ENCODE measurements at regions of chr19 and their contacts with region 1.

Region 1: GRCh38 chr19:46186101-46187100 is 38.4 kb downstream of the IGFL2 start:
- DNase-seq: peak in 1 of 2 donors; percentile 63
- H3K4me3 ChIP-seq: no peak overlapping the region
- CTCF ChIP-seq: no peak
- POLR2A ChIP-seq: no peak

Region 2: GRCh38 chr19:46076951-46077816 is 109.2 kb before region 1 on chr19:
- intact Hi-C with region 1: loop called (anchors 5 kb)
- DNase-seq: peak; percentile 54 to 88
- H3K4me3 ChIP-seq: no peak overlapping the region
- CTCF ChIP-seq: peak in 1 of 3 donors; percentile 47
- POLR2A ChIP-seq: no peak

Region 3: DNA sequence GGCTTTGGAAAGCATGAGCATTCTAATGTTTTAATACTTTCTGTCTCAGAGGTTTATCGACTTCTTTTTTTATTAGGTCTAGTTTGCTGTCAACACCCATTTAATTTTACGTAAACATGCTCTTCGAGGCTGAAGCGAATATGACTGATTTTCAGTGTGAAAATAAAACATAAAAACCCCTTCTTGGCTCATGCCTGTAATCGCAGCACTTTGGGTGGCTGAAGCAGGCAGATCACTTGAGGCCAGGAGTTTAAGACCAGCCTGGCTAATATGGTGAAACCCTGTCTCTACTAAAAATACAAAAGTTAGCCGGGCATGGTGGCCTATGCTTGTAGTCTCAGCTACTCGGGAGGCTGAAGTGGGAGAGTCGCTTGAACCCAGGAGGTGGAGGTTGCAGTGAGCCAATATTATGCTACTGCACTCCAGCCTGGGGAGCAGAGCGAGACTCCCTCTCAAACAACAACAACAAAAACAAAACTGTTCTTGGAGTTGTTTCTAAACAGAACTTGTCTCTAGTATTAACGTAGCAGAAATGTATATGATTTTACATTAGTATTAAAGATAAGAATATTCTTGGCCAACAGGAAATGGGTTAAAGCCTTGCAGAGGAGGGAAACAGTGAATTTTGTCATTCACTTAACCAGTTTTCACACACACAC is 54.8 kb before region 1 on chr19:
- intact Hi-C with region 1: no loop called
- DNase-seq: no peak
- H3K4me3 ChIP-seq: no peak overlapping the region
- CTCF ChIP-seq: no peak
- POLR2A ChIP-seq: no peak

Region 4: DNA sequence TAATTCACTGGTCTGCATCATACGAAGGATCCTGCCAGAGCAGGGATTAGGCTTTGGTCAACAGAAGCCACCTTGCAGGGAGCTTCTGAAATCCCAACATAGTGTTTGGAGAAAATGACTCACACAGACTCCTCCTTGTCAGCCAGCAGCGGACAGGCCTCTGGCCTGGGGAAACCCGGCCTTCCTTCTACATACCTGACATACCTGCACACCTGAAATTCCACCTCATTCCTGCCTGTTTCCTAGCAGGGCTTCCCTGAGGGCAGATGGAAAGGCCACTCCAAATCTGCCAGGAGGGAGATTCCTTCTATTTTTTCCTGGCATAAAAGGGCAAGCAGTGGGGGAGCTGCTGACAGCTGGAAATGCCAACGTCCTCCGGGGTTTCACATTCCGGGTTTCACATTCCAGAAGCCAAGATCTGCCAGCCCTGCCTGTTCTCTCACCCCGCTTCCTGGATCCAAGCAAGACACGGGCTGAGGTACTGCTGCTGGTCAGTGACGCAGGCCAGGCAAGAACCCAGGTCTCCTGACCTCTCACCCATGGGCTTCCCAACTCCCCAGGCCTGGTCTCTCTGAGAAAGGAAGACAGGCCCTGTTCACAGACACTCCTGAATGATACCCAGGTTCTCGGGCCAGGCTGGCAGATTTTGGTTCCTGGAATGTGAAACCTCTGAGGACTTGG is 24.9 kb after region 1 on chr19:
- intact Hi-C with region 1: no loop called
- DNase-seq: no peak
- H3K4me3 ChIP-seq: no peak overlapping the region
- CTCF ChIP-seq: no peak
- POLR2A ChIP-seq: no peak